Activated CD8-positive, alpha-beta T cell treated with anti-CD3 and anti-CD28 coated beads, Interleukin-2, amount 10 ng/mL, durations not matched to agents 7 days and 5 days (primary cell): ENCODE measurements at regions of chr11 and their contacts with region 1.

Region 1: DNA sequence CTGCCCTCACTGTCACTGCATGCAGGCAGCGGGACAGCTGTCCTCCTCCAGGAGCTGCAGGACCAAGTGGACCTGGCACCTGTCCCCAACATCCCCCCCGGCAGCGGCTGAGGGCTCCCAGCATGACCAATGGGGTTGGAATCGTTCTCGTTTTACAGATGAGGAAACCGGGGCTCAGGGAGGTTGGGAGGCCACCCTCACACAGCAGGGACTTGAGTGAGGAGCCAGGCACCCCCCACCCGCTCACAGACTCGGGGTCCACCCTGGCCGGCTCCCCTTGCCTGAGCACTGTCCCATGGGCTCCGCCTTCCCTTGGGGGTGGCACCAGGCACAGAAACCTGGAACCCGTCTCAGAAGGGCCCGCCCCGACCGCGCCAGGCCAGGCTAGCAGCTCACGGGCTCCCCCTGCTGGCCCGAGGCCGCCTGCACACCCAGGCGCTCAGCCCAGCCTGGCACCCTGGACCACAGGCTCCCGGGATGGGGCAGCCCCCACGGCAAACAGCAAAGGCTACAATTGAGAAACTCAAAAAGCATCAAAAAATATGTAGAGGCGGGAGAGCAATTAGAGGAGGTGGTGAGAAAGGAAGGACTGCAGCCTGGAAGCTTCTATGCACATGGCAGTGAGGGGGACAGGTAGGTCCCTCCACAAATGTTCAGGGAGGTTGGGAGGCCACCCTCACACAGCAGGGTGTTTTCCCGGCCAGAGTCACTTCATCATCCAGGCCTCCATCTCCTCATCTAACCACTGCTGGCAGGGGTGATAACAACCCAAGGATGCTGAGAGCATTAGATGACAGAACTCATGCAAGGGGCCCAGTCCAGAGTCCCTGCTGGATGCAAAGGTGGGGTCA is 12.8 kb downstream of the MACROD1 start:
- DNase-seq: peak; percentile 79
- ATAC-seq: peak; percentile 96
- H3K4me3 Mint-ChIP-seq: no peak overlapping the region
- H3K27ac Mint-ChIP-seq: no peak overlapping the region
- H3K4me1 Mint-ChIP-seq: peaks cover 5% of the 10 kb centered on the region
- H3K27me3 Mint-ChIP-seq: peaks cover 3% of the 10 kb centered on the region

Region 2: GRCh38 chr11:64000026-64000739 is 152.9 kb before region 1 on chr11:
- CTCF ChIA-PET with region 1: interaction called, 82 read pairs
- POLR2A ChIA-PET with region 1: interaction called, 3 read pairs
- DNase-seq: peak; percentile 76
- ATAC-seq: peak; percentile 85
- H3K4me3 Mint-ChIP-seq: no peak overlapping the region
- H3K27ac Mint-ChIP-seq: no peak overlapping the region
- H3K4me1 Mint-ChIP-seq: peaks cover 26% of the 10 kb centered on the region
- H3K27me3 Mint-ChIP-seq: no peaks in the 10 kb centered on the region

Region 3: GRCh38 chr11:64165849-64166635 is 13.0 kb after region 1 on chr11 and contains the start of gene MACROD1:
- CTCF ChIA-PET with region 1: interaction called, 19 read pairs
- POLR2A ChIA-PET with region 1: no interaction called
- DNase-seq: peak; percentile 88
- ATAC-seq: peak; percentile 98
- H3K4me3 Mint-ChIP-seq: peak within 1 kb of the TSS; percentile 86
- H3K27ac Mint-ChIP-seq: peak within 1 kb of the TSS; percentile 78
- H3K4me1 Mint-ChIP-seq: peaks cover 19% of the 10 kb centered on the region
- H3K27me3 Mint-ChIP-seq: no peaks in the 10 kb centered on the region
- total RNA-seq, gene MACROD1: 14.4 to 14.6 TPM